WTC11 (cell line): ENCODE measurements at regions of chr6 and their contacts with region 1.

Region 1: DNA sequence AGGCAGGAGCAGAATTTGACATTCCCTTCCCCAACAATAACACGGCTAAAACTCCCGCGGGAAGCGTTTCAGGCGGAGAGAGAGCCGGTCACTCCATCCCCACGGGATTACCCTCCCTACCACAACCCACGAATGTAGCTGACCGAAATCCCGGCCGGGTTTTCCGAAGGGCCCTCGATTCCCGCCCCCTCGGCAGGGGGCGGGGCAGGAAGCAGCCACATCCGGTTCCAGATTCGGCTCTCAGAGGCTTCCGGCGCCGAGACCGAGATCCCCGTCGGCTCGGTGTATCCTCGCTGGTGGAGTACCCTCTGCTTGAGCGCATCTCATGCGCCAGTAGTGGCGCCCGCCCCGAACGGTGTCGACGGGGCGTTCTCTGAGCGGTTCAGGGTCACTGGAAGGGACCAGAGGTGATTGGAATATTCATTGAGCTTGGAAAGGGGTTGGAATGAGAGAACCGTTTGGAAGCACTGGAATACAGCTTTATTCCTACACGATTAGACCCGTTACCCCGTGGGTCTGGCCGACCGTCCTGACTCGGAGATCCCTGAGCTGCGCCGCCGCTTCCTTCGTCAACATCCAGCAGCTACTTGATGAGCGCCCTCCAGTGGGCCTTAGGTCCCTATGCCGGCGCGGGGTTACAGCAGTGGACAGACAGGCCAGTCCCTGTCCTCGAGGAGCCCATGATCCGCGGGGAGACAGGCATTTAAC is 649 bp upstream of the RGL2 start:
- DNase-seq: peak; percentile 87
- ATAC-seq: peak; percentile 54
- H3K4me3 Mint-ChIP-seq: peak overlapping the region; percentile 99
- H3K27ac Mint-ChIP-seq: peak overlapping the region; percentile 100
- H3K4me1 Mint-ChIP-seq: peaks cover 17% of the 10 kb centered on the region
- H3K27me3 Mint-ChIP-seq: no peaks in the 10 kb centered on the region
- CTCF ChIP-seq: peak; percentile 56

Region 2: GRCh38 chr6:33288921-33289748 is 10.3 kb before region 1 on chr6 and contains the starts of genes PFDN6 and WDR46:
- CTCF ChIA-PET with region 1: interaction called, 16 read pairs
- POLR2A ChIA-PET with region 1: interaction called, 8 read pairs
- DNase-seq: peak; percentile 68
- ATAC-seq: peak; percentile 94
- H3K4me3 Mint-ChIP-seq: peak within 1 kb of the TSS; percentile 99
- H3K27ac Mint-ChIP-seq: peak within 1 kb of the TSS; percentile 95
- H3K4me1 Mint-ChIP-seq: peaks cover 22% of the 10 kb centered on the region
- H3K27me3 Mint-ChIP-seq: no peaks in the 10 kb centered on the region
- CTCF ChIP-seq: no peak
- total RNA-seq, gene PFDN6: 83.3 to 95.7 TPM (median 85.6 TPM) in 3 replicates
- total RNA-seq, gene WDR46: 72.0 to 94.5 TPM (median 72.4 TPM) in 3 replicates

Region 3: GRCh38 chr6:33317669-33318425 is 18.5 kb after region 1 on chr6 and contains the start of gene ZBTB22:
- CTCF ChIA-PET with region 1: interaction called, 29 read pairs
- POLR2A ChIA-PET with region 1: interaction called, 8 read pairs
- DNase-seq: peak; percentile 99
- ATAC-seq: peak; percentile 81
- H3K4me3 Mint-ChIP-seq: peak within 1 kb of the TSS; percentile 97
- H3K27ac Mint-ChIP-seq: peak within 1 kb of the TSS; percentile 91
- H3K4me1 Mint-ChIP-seq: peaks cover 65% of the 10 kb centered on the region
- H3K27me3 Mint-ChIP-seq: no peaks in the 10 kb centered on the region; the same call in 1 of the 2 replicates
- CTCF ChIP-seq: no peak
- total RNA-seq, gene ZBTB22: 11.6 to 14.7 TPM (median 13.7 TPM) in 3 replicates